ENCODE measurements at regions of chr9 and their contacts with region 1.

Region 1: DNA sequence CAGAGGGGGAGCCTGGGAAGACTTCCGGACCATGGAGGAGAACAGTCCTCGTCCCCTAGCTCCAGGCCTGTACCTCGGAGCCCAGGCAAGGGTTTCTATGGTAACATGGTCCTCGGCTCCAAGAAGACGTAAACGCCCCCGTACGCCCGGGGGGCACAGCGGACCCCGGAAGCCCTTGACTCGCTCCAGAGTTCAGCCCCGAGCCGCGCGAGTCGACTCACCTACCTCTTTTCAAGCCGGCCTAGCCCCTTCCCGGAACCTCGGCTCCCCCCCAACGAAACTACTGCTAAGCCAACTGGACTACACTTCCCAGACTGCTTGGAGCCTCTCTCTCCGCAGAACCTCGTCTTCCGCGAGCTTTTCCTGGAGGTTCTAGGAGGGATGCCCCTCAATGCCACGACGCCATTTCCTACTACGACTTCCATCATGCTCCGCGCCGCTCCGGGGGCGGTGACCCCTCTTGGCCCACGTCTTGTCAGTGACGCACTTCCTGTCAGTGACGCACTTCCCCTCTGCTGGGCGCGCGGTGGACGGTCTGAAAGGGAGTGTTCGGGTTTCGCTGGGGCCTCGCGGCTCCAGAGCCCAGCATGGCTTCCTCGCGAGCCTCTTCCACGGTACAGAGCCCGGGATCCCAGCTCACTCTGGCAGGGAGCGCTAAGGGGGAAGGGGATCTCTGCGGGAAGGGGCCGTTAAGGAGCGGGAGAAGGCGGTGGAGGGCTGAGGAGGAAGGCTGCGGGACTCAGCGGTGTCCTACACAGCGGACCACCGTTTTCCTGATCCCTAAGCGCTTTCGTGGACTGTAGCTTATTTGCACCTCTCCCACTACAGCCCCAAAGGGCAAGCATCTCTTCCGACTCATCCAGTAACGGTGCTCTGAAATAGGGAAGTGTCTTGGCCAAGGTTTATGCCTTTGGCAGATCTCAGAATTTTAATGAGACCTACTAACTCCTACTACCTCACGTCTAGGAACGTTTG is at the starts of genes CDC26 and PRPF4:
- DNase-seq: peak; percentile 90 to 94
- H3K4me3 ChIP-seq: peak within 1 kb of the TSS; percentile 81
- H3K27ac ChIP-seq: peak within 1 kb of the TSS; percentile 50
- H3K4me1 ChIP-seq: peaks cover 13% of the 10 kb centered on the region
- H3K27me3 ChIP-seq: no peaks in the 10 kb centered on the region
- CTCF ChIP-seq: no peak
- total RNA-seq, gene CDC26: 40.4 and 43.4 TPM in 2 replicates
- total RNA-seq, gene PRPF4: 31.6 and 36.3 TPM in 2 replicates

Region 2: GRCh38 chr9:112921549-112921948 is 353.9 kb before region 1 on chr9:
- CTCF ChIA-PET with region 1: no interaction called
- POLR2A ChIA-PET with region 1: no interaction called
- intact Hi-C with region 1: loop called (anchors 10 kb)
- DNase-seq: peak in 1 of 2 experiments; percentile 50
- H3K4me3 ChIP-seq: no peak overlapping the region
- H3K27ac ChIP-seq: no peak overlapping the region
- H3K4me1 ChIP-seq: peaks cover 28% of the 10 kb centered on the region
- H3K27me3 ChIP-seq: no peaks in the 10 kb centered on the region
- CTCF ChIP-seq: peak; percentile 57; the same call in 1 of the 2 replicates

Region 3: GRCh38 chr9:113011911-113012381 is 263.5 kb before region 1 on chr9 and contains the start of gene ZNF883:
- CTCF ChIA-PET with region 1: no interaction called
- POLR2A ChIA-PET with region 1: no interaction called
- intact Hi-C with region 1: no loop called
- DNase-seq: peak in 1 of 2 experiments; percentile 41
- H3K4me3 ChIP-seq: peak within 1 kb of the TSS; percentile 45; the same call in 1 of the 2 replicates
- H3K27ac ChIP-seq: no peak within 1 kb of the TSS
- H3K4me1 ChIP-seq: no peaks in the 10 kb centered on the region
- H3K27me3 ChIP-seq: peaks cover 8% of the 10 kb centered on the region; the same call in 1 of the 2 replicates
- CTCF ChIP-seq: no peak
- total RNA-seq, gene ZNF883: 1.7 and 2.2 TPM in 2 replicates

Region 4: DNA sequence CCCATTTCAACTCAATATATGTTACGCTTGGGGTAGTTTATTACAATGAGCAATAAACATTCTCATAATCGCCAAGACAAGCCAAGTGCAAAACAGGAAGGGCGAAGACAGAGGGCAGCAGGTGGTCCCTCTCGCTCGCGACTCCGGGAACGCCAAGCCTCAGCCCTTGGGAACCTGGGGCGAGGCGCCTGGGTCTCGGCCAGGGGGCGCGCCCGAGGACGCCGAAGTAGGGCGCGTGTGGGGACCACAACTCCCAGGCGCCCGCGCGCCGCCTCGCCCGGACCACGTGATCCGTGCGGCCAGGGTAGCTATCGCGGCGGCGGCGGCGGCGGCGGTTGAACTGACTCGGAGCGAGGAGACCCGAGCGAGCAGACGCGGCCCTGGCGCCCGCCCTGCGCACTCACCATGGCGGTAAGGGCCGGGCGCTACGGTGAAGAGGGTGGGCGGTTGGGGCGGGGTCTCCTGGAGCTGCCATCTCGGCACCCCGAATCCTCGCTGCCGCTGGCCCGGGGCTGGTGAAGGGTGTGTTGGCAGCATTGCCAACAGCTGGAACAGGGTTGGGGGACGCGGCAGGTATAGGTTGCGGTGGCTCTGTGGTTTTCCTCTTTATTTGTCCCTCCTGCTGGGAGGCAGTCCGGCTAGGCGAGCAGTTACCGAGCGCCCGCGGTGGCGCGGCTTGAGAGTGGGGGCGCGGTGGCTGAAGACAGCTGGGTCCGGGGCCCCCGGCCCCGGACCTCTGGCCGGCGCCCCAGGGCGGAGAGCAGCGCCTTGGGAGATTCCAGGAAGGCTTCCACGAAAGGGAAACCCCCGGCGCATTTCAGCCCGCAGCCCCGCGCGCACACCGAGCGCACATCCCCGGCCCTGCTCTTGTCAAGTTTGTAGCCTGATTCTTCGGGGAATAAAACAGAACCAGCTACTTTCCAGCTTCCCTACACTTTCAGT is 124.5 kb before region 1 on chr9 and contains the start of gene SLC31A2:
- CTCF ChIA-PET with region 1: interaction called, 3 read pairs
- POLR2A ChIA-PET with region 1: interaction called, 3 read pairs
- intact Hi-C with region 1: loop called (anchors 10 kb)
- DNase-seq: peak; percentile 72 to 93
- H3K4me3 ChIP-seq: peak within 1 kb of the TSS; percentile 77
- H3K27ac ChIP-seq: no peak within 1 kb of the TSS
- H3K4me1 ChIP-seq: peaks cover 31% of the 10 kb centered on the region
- H3K27me3 ChIP-seq: no peaks in the 10 kb centered on the region
- CTCF ChIP-seq: no peak; the same call in 1 of the 2 replicates
- total RNA-seq, gene SLC31A2: 15.1 and 16.5 TPM in 2 replicates

Region 5: GRCh38 chr9:113221003-113221799 is 54.2 kb before region 1 on chr9 and contains the starts of genes FKBP15 and SLC31A1:
- CTCF ChIA-PET with region 1: interaction called, 9 read pairs
- POLR2A ChIA-PET with region 1: interaction called, 7 read pairs
- intact Hi-C with region 1: loop called (anchors 2 kb)
- DNase-seq: peak; percentile 95 to 99
- H3K4me3 ChIP-seq: peak within 1 kb of the TSS; percentile 79
- H3K27ac ChIP-seq: peak within 1 kb of the TSS; percentile 51
- H3K4me1 ChIP-seq: peaks cover 29% of the 10 kb centered on the region
- H3K27me3 ChIP-seq: no peaks in the 10 kb centered on the region
- CTCF ChIP-seq: no peak
- total RNA-seq, gene FKBP15: 23.3 and 33.5 TPM in 2 replicates
- total RNA-seq, gene SLC31A1: 24.9 and 27.2 TPM in 2 replicates

Region 6: GRCh38 chr9:113410207-113410864 is 134.9 kb after region 1 on chr9 and contains the starts of genes C9orf43 and POLE3:
- CTCF ChIA-PET with region 1: interaction called, 5 read pairs
- POLR2A ChIA-PET with region 1: no interaction called
- intact Hi-C with region 1: loop called (anchors 1 kb)
- DNase-seq: peak; percentile 87 to 95
- H3K4me3 ChIP-seq: peak within 1 kb of the TSS; percentile 76
- H3K27ac ChIP-seq: peak within 1 kb of the TSS; percentile 89
- H3K4me1 ChIP-seq: peaks cover 18% of the 10 kb centered on the region
- H3K27me3 ChIP-seq: no peaks in the 10 kb centered on the region
- CTCF ChIP-seq: no peak
- total RNA-seq, gene C9orf43: 1.5 and 2.5 TPM in 2 replicates
- total RNA-seq, gene POLE3: 53.8 and 64.5 TPM in 2 replicates

Region 7: GRCh38 chr9:113591001-113591898 is 315.8 kb after region 1 on chr9:
- CTCF ChIA-PET with region 1: interaction called, 4 read pairs
- POLR2A ChIA-PET with region 1: no interaction called
- intact Hi-C with region 1: loop called (anchors 2 kb)
- DNase-seq: peak in 1 of 2 experiments; percentile 79
- H3K4me3 ChIP-seq: no peak overlapping the region
- H3K27ac ChIP-seq: no peak overlapping the region
- H3K4me1 ChIP-seq: no peaks in the 10 kb centered on the region
- H3K27me3 ChIP-seq: no peaks in the 10 kb centered on the region
- CTCF ChIP-seq: peak; percentile 95

Measured in PC-9 (cell line).